ENCODE measurements at regions of chr1 and their contacts with region 1.

Region 1: DNA sequence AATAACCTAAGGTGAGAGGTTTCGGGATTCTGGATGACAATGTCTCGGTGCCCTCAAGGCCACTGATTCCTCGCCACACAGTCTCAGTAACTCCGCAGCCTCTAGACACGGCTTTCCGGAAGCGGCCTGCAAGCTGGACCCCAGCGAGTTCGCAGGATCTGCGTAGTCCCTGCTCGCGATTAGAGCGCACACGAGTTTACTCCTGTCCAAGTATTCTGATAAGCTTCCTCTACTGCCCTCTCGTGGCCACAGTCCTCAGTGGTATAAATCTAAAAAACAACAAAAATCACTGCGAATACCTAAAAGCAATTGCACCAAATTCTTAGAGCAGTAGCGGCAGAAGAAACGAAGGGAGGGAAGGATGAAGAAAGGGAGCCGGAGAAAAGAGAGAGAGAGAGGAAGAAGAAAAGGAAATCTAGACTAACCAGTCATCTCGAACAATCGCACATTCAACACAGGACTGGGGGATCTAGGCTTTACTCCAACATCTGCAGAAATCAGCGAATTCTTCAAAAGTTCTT is 1.1 kb upstream of the PLXNA2 start:
- DNase-seq: peak; percentile 95
- ATAC-seq: peak; percentile 91
- H3K4me3 ChIP-seq: peak overlapping the region in 1 of 2 donors; percentile 81
- H3K27ac ChIP-seq: peak overlapping the region in 1 of 2 donors; percentile 53
- H3K4me1 ChIP-seq: peaks cover 2 to 3% of the 10 kb centered on the region in 2 donors
- H3K27me3 ChIP-seq: no peaks in the 10 kb centered on the region

Region 2: GRCh38 chr1:208029381-208030287 is 215.6 kb before region 1 on chr1:
- intact Hi-C with region 1: loop called in 1 of 2 experiments (anchors 5 kb)
- DNase-seq: peak; percentile 77 to 84
- ATAC-seq: peak; percentile 64
- H3K4me3 ChIP-seq: no peak overlapping the region
- H3K27ac ChIP-seq: peak overlapping the region; percentile 58 to 72
- H3K4me1 ChIP-seq: peaks cover 3 to 4% of the 10 kb centered on the region in 2 donors
- H3K27me3 ChIP-seq: no peaks in the 10 kb centered on the region

Region 3: GRCh38 chr1:208093754-208094719 is 151.2 kb before region 1 on chr1:
- intact Hi-C with region 1: loop called (anchors 2 to 5 kb)
- DNase-seq: peak; percentile 76 to 89
- ATAC-seq: peak; percentile 51
- H3K4me3 ChIP-seq: no peak overlapping the region
- H3K27ac ChIP-seq: no peak overlapping the region
- H3K4me1 ChIP-seq: no peaks in the 10 kb centered on the region
- H3K27me3 ChIP-seq: no peaks in the 10 kb centered on the region

Region 4: GRCh38 chr1:208132287-208132883 is 112.9 kb before region 1 on chr1:
- intact Hi-C with region 1: loop called (anchors 2 to 5 kb)
- DNase-seq: peak; percentile 85 to 95
- ATAC-seq: peak; percentile 86
- H3K4me3 ChIP-seq: no peak overlapping the region
- H3K27ac ChIP-seq: no peak overlapping the region
- H3K4me1 ChIP-seq: peaks cover 0 to 6% of the 10 kb centered on the region in 2 donors
- H3K27me3 ChIP-seq: no peaks in the 10 kb centered on the region

Region 5: GRCh38 chr1:208177656-208178055 is 67.6 kb before region 1 on chr1:
- intact Hi-C with region 1: no loop called
- DNase-seq: no peak
- ATAC-seq: no peak
- H3K4me3 ChIP-seq: no peak overlapping the region
- H3K27ac ChIP-seq: no peak overlapping the region
- H3K4me1 ChIP-seq: peaks cover 0 to 12% of the 10 kb centered on the region in 2 donors
- H3K27me3 ChIP-seq: no peaks in the 10 kb centered on the region

Region 6: DNA sequence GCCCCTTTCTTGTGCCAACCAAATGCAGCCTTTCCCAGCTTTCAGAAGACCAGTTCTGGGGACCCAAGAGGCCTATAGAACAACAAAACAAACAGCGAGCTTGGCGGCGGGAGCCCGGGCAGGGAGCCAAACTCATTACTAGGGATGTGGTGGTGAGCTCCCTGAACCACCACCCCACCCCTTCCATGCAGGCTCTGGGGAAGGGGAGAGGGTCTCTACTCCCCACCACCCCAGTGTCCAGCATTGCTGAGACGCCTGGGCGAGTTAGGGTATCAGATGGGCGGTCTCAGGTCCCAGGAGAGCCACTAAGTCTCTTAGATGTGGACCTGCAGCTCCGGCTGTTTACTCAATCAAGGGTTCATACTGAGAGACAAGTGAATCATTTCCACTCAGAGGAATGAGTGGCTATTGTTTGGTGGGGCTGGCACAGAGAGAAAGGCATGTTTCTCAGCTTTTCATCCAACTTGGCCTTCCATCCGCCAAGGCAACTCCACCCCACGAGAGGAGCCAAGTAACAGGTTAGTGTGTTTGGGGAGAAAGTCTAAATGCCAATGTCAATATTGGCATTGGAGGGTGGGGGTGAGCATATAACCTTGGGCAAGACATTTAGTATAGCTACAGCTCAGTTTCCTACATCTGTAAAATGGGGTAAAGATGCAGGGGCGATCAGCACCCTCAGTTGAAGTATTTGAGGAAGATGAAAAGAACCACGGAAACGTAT is 42.0 kb before region 1 on chr1:
- intact Hi-C with region 1: loop called in 1 of 2 experiments (anchors 2 kb)
- DNase-seq: peak in 1 of 2 donors; percentile 86
- ATAC-seq: peak; percentile 47
- H3K4me3 ChIP-seq: no peak overlapping the region
- H3K27ac ChIP-seq: peak overlapping the region; percentile 29 to 78
- H3K4me1 ChIP-seq: peaks cover 2 to 12% of the 10 kb centered on the region in 2 donors
- H3K27me3 ChIP-seq: no peaks in the 10 kb centered on the region

Region 7: DNA sequence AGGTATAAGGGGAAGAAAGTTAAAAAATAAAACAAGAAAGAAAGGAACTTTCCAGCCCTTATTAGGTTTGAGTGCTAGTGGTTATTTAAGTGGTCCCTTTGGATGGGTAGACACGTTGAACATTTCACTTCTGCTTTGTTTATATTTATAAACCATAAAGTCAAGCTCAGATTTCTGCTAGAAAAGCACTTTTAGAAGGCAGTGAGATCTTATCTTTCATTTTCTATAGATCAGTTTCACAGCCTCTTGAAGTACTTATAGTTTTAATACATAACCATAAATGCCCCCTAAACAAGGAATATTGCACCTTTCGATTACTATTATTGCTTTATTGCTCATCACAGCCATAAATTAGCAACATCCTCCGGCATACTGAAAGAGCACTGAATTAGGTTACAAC is 445.8 kb after region 1 on chr1:
- intact Hi-C with region 1: no loop called
- DNase-seq: no peak
- ATAC-seq: no peak
- H3K4me3 ChIP-seq: no peak overlapping the region
- H3K27ac ChIP-seq: no peak overlapping the region
- H3K4me1 ChIP-seq: no peaks in the 10 kb centered on the region
- H3K27me3 ChIP-seq: peaks cover 0 to 2% of the 10 kb centered on the region in 2 donors

Measured in aorta (tissue), 5 donors.